ENCODE measurements at regions of chr5 and their contacts with region 1.

Region 1: GRCh38 chr5:160081495-160081894 is 37.8 kb downstream of the PWWP2A start:
- DNase-seq: no peak
- H3K4me3 ChIP-seq: no peak overlapping the region
- H3K27ac ChIP-seq: no peak overlapping the region
- H3K27me3 ChIP-seq: no peaks in the 10 kb centered on the region
- CTCF ChIP-seq: no peak

Region 2: DNA sequence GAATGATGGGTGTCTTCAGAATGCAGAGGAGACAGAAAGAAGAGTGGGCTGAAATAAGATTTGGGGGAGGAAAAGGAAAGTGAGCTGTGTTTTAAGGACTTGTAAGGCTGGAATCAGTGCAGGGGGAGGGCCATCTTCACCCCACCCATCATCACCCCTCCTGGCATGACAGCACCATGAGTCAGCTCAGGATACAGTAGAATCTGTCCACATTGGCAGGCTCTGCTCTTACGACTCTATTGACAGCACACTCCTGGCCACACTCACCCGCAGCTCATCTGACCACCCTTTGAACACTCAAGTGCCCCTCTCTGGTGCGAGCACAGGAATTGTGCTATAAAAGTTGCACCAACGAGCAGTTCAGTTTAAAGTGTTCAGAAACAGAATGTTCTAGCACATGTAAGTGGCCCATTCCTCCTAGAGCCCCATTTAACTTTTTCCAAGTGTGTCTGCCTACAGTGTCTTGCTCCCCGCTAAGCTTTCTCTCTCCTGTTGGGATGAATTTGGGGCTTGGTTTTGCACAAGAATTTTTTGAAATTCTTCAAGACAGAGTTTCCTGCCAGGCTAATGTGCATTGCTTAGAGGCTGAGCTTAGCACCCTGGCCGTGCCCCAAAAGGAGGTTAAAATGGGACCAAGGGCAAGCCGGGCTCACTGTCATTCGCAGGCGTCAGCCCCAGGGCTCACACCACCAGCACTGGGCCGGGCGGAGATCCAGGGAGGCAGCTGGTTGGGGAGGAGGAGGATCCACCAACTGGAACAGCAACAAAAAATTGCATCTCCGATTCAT is 153.2 kb before region 1 on chr5:
- CTCF ChIA-PET with region 1: no interaction called
- POLR2A ChIA-PET with region 1: no interaction called
- DNase-seq: peak; percentile 43
- H3K4me3 ChIP-seq: peak overlapping the region; percentile 35
- H3K27ac ChIP-seq: peak overlapping the region; percentile 23
- H3K27me3 ChIP-seq: no peaks in the 10 kb centered on the region
- CTCF ChIP-seq: no peak

Region 3: GRCh38 chr5:160108124-160108523 is 26.6 kb after region 1 on chr5:
- CTCF ChIA-PET with region 1: interaction called, 10 read pairs
- POLR2A ChIA-PET with region 1: interaction called, 3 read pairs
- DNase-seq: no peak
- H3K4me3 ChIP-seq: no peak overlapping the region
- H3K27ac ChIP-seq: no peak overlapping the region
- H3K27me3 ChIP-seq: no peaks in the 10 kb centered on the region
- CTCF ChIP-seq: no peak

Region 4: DNA sequence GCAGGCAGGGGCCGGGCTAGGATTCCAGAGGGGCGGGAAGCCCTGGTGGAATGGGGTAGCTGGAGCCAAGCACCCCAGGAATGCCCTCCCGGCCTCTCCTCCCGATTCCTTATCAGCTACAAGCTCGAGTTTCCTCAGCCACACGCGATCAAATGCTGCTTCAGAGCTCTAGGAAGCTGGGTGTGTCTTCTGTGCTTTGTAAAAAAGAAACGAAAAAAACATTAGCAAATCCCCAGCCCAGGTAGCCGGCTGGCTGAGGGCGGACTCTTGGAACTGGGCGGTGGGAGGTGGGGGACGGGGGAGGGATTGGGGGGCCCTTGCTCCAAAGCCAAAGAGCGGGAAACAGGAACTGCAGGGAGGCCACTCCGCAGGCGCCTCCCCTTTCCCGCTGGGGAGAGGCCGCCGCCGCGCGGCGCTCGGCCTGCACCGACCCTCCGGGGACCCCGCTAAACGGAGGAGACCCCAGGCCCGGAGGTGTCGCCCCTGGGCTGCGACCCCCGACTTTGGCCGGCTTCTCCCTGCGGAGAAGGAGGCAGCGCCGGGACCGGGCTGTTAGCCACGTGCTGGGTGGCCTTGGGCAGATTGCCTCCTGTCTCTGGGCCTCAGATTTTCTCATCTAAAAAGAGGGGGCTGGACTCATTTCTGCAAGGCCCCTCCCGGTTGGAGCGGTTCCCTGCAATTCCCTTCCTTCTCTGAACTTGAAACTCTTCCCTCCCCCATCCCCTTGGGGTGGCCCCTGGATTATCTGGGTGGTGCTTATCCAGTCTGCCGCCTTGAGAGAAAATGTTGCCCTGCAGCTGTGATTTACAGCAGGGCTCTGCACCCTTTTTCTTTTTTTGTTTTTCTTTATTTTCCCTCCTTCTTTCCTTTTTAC is 106.9 kb after region 1 on chr5:
- CTCF ChIA-PET with region 1: interaction called, 11 read pairs
- POLR2A ChIA-PET with region 1: no interaction called
- DNase-seq: no peak
- H3K4me3 ChIP-seq: peak overlapping the region; percentile 47
- H3K27ac ChIP-seq: peak overlapping the region; percentile 31
- H3K27me3 ChIP-seq: no peaks in the 10 kb centered on the region
- CTCF ChIP-seq: no peak

Region 5: GRCh38 chr5:160342403-160342941 is 261.0 kb after region 1 on chr5:
- CTCF ChIA-PET with region 1: interaction called, 23 read pairs
- POLR2A ChIA-PET with region 1: no interaction called
- DNase-seq: no peak
- H3K4me3 ChIP-seq: no peak overlapping the region
- H3K27ac ChIP-seq: no peak overlapping the region
- H3K27me3 ChIP-seq: no peaks in the 10 kb centered on the region
- CTCF ChIP-seq: no peak

Region 6: DNA sequence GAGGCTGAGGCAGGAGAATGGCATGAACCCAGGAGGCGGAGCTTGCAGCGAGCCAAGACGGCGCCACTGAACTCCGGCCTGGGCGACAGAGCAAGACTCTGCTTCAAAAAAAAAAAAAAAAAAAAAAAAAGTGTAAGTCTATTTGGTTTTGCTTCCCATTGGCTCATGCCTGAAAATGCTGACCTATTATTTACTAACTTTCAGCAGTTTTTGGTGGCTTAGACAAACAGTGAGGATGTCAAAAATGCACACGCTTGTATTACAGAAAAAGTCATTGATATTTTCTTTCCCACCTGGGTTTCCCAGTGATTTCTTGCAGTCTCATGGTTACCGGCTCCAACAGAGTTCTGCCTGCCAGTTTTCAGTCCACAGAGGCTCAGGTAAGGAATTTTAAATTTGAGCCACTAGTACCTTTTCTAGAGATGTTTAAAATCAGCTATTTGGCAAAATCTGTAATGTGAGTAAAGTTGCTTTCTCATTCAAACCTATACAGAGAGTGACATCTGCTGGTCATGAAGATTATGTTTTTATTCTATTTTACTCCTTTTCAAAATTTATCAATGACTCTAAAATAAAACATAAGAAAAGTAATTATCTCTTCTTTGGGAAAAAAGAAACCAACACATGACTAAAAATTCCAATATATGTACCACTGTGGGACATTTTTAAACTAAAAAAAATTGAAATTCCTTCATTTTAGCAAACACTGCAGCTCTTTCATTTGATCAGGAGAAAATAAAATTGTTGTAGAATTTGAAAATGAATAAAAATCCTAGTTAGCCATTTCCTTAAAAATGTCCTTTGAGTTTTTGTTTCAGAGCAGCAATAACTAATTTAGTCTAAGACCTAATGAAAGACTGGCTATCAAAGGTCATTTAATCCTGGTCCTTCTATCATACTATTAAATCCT is 309.5 kb after region 1 on chr5:
- CTCF ChIA-PET with region 1: interaction called, 11 read pairs
- POLR2A ChIA-PET with region 1: no interaction called
- DNase-seq: no peak
- H3K4me3 ChIP-seq: no peak overlapping the region
- H3K27ac ChIP-seq: no peak overlapping the region
- H3K27me3 ChIP-seq: no peaks in the 10 kb centered on the region
- CTCF ChIP-seq: peak; percentile 56

Measured in AG04450 (cell line).